ENCODE measurements at regions of chr14 and their contacts with region 1.

Region 1: GRCh38 chr14:77133720-77134338 is 7.8 kb downstream of the ZDHHC22 start:
- DNase-seq: peak; percentile 87

Region 2: DNA sequence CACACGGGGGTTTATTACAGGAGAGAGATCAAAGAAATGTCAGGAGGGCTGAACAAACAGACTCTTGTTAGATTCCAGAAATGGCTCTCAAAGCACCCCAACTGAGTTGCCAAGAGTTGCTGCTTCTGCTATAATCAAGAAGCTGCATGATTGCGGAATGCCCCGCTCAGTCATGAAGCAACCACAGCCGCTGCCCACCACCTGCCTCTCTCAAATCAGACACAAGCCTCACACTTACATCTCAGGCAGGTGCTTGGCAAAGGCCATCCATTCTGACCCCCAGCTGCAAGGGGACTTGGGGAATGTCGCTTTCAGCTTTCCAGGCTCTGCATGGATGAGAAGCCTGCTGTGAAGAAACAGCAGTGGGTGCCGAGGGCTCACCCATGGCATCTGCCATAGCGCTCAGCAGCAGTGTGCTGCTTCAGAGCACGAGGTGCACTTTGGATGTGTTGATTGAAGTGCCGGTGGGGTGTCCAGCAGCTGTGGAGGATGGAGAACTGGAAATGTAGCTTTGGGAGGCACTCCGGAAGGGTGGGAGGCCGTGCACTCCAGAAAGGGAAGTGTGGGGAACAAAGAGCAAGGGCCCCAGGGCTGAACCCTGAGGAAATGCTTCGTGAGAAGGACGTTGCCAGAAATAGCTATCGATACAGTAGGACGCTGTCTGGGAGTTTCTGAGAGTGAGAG is 270.0 kb before region 1 on chr14:
- intact Hi-C with region 1: no loop called
- DNase-seq: no peak

Region 3: DNA sequence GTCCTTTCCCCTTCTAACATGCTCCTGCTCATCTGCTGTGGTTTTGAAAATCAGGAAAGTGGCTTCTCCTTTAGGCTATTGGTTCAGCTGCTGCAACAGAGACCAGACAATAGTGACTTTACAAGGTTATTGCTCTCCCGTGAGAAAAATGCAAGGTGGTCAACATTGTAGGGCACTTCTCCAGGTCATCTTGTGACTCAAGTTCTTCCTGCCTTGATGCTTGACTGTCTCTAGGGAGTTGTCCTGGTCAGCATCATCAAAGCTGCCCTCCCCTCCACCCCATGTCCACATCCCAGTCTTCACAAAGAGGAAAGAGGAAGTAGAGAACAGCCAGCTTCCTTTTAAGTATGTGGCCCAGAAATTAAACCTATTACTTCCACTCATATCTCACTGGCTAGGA is 43.9 kb after region 1 on chr14:
- intact Hi-C with region 1: no loop called
- DNase-seq: no peak

Region 4: DNA sequence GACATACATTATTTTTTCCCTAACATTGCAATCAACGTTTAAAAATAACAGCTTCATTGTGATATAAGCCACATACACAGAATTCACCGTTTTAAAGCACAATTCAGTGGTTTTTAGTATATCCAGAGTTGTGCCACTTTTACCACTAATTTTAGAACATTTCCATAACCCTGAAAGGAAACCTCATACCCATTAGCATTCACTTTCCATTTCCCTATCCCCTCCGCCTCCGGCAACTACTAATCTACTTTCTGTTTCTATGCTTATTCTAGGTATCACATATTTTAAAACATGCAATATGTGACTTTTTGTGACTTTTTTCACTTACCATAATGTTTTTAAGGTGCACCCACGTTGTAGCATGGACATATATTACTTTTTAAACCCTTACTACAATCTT is 420.4 kb after region 1 on chr14:
- intact Hi-C with region 1: loop called in 1 of 2 experiments (anchors 10 kb)
- DNase-seq: no peak